A673 (cell line): ENCODE measurements at regions of chr7 and their contacts with region 1.

Region 1: GRCh38 chr7:64832136-64832535 is 37.9 kb downstream of the ZNF138 start:
- DNase-seq: no peak
- H3K4me3 ChIP-seq: no peak overlapping the region
- H3K27ac ChIP-seq: no peak overlapping the region
- H3K4me1 ChIP-seq: no peaks in the 10 kb centered on the region
- H3K27me3 ChIP-seq: no peaks in the 10 kb centered on the region
- CTCF ChIP-seq: no peak

Region 2: GRCh38 chr7:64433590-64433989 is 398.5 kb before region 1 on chr7:
- CTCF ChIA-PET with region 1: no interaction called
- POLR2A ChIA-PET with region 1: no interaction called
- intact Hi-C with region 1: no loop called
- DNase-seq: no peak
- H3K4me3 ChIP-seq: no peak overlapping the region
- H3K27ac ChIP-seq: no peak overlapping the region
- H3K4me1 ChIP-seq: no peaks in the 10 kb centered on the region
- H3K27me3 ChIP-seq: no peaks in the 10 kb centered on the region
- CTCF ChIP-seq: no peak

Region 3: GRCh38 chr7:64887756-64888508 is 55.8 kb after region 1 on chr7:
- CTCF ChIA-PET with region 1: no interaction called
- POLR2A ChIA-PET with region 1: no interaction called
- intact Hi-C with region 1: loop called (anchors 10 kb)
- DNase-seq: peak; percentile 50
- H3K4me3 ChIP-seq: peak overlapping the region; percentile 13
- H3K27ac ChIP-seq: no peak overlapping the region
- H3K4me1 ChIP-seq: no peaks in the 10 kb centered on the region
- H3K27me3 ChIP-seq: no peaks in the 10 kb centered on the region
- CTCF ChIP-seq: peak; percentile 65

Region 4: GRCh38 chr7:64978497-64979203 is 146.5 kb after region 1 on chr7:
- CTCF ChIA-PET with region 1: no interaction called
- POLR2A ChIA-PET with region 1: no interaction called
- intact Hi-C with region 1: no loop called
- DNase-seq: no peak
- H3K4me3 ChIP-seq: no peak overlapping the region
- H3K27ac ChIP-seq: no peak overlapping the region
- H3K4me1 ChIP-seq: no peaks in the 10 kb centered on the region
- H3K27me3 ChIP-seq: no peaks in the 10 kb centered on the region
- CTCF ChIP-seq: no peak